ENCODE measurements at regions of chr19 and their contacts with region 1.

Region 1: DNA sequence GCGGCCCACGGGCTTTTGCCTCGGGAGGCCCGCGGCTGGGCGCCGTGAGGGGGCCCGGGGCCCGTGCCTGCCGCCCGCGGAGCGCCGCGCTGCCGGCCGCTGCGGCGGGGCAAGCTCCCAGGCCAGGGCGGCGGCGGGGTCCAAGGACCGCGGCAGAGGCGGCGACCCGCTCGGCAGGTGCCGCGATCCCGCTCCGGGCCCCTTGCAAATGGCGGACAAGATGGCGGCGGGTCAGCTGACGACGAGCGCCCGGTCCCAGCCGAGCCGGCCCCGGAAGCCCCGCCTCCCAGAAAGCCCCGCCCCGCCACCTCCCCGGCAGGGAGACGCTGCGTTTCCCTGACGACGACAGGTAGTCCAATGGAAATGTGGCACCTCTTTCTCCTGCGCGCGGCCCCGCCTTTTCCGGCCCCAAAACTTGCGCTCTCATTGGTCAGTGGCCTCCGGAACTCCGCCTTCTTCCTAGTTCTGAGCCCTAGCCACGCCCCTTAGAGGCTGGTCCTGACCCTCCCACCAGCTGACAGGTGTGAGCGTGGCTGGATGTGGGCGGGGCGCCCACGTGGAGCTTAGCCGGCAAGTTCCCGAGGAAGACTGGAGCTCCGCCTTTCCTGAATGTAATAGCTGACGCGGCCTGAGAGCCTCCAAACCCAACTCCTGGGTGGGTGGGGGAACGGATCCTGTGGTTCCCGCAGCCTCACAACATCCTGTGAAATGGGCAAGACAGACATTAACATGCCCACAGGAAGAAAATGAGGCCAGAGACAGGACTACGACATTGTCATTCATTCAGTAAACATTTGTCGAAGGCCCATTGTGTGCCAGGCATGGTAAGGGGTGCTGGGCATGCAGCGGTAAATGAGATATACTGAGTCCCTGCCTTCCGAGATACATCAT is at the start of gene AP3D1:
- DNase-seq: peak; percentile 100
- CTCF ChIP-seq: no peak

Region 2: DNA sequence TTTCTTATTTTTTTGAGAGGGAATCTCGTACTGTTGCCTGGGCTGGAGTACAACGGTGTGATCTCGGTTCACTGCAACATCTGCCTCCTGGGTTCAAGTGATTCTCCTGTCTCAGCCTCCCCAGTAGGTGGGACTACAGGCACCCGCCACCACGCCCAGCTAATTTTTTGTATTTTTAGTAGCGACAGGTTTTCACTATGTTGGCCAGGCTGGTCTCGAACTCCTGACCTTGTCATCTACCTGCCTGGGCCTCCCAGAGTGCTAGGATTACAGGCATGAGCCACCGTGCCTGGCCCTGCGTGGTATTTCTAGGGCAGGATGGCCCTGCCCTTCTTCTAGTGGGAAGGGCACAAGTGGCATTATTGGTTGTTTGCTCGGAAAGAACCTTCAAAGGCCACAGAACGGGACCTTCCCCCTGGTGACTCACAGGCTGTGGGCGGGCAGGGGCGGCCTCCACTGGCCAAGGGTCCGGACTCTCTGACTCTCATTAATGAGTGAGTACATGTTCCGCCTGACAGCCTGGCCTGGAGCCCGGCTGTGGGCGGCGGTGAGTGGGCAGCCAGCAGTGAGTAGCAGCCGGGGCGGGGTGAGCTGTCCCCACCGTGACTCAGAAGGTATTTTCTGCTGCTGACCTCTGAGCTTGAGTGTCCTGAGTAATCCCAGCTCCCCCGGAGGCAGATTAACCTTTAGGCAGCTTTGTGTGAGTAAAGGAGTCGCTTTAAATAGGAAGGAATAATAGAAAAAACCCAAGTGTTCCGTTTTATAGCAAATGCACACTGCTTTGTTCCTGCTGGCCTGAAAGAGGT is 17.2 kb after region 1 on chr19:
- CTCF ChIA-PET with region 1: interaction called, 12 read pairs
- POLR2A ChIA-PET with region 1: interaction called, 4 read pairs
- DNase-seq: peak; percentile 84
- CTCF ChIP-seq: peak; percentile 9

Region 3: GRCh38 chr19:2215281-2215751 is 63.7 kb after region 1 on chr19:
- CTCF ChIA-PET with region 1: interaction called, 14 read pairs
- POLR2A ChIA-PET with region 1: no interaction called
- DNase-seq: no peak
- CTCF ChIP-seq: no peak

Region 4: DNA sequence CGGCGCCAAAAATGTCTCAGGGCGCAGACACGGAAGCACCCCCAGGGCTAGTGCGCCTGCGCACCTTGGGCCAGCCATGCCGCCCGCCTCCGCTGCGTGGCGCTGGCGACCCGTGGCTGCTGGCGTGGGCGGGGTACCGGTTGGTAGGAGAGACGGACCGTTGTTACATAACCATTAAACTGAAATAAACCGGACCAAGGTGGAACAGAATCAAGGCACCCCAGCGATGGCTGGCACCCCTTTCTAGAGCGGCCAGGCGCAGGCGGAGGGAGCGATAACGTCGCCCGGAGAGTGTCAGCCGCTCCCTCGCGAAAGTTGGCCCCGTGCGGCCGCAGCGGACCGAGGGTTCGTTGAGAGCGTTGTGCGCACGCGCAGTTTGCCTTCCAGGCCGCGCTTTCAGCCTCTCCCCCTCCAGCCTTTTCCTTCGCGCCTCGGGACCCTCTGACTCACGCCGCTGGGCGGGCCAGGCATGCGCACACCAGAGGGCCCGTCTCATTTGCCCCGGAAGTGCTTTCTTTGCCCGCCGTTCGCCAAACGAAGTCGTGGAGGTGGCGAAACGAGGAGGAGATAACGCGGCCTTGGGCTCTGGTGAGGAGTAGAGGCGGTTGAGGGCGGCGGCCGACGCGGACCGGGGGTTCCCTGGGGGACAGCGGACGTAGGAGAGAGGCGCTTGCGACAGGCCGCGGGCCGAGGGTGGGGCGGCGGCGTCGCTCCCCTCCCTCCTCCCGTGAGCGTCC is 84.9 kb after region 1 on chr19 and contains the starts of genes PLEKHJ1 and SF3A2:
- CTCF ChIA-PET with region 1: interaction called, 11 read pairs
- POLR2A ChIA-PET with region 1: no interaction called
- DNase-seq: peak; percentile 99
- CTCF ChIP-seq: peak; percentile 99

Region 5: DNA sequence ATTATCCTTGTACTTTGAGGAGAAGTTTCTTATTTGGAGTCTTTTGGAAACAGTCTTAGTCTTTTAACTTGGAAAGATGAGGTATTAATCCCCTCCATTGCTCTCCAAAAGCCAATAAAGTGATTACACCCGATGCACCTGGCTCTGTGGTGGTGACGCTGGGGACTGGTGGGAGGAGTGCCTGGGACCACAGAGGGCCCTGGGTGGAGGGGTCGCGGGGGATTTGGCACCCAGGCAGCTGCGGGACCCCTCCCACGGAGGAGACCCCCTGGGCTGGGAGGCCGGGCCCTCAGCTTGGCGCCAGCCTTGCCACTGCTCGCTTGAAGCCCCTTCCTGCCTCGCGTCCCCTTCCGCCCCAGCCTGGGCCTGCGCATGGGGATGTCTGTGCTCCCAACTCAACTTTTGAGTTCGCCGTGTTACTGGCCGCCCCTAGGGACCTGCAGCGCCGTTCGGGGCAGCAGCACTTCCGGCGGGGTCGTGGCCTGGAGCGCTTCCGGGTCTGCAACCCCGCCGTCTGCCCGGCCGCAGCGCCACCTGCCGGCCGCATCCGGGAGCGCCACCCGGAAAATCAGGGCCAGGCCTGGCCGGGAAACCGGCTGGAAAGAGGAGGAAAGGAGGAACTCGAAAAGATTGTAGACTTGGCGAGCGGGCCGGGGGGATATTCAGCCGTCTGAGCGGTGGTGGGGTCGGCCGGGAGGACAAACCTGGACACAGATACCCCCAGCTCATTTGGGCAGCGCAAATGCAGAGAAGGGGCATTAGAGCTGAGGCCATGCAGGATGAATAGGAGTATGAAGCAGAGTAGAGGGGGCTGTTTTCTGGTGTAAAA is 122.0 kb after region 1 on chr19:
- CTCF ChIA-PET with region 1: interaction called, 21 read pairs
- POLR2A ChIA-PET with region 1: interaction called, 5 read pairs
- DNase-seq: peak; percentile 90
- CTCF ChIP-seq: peak; percentile 95